SK-N-SH (cell line): ENCODE measurements at regions of chr3 and their contacts with region 1.

Region 1: GRCh38 chr3:50337191-50337841 is 3.3 kb downstream of the RASSF1 start:
- DNase-seq: peak; percentile 100
- H3K4me3 ChIP-seq: peak overlapping the region; percentile 77 to 79
- H3K27ac ChIP-seq: peak overlapping the region; percentile 82 to 98
- H3K4me1 ChIP-seq: peaks cover 10 to 33% of the 10 kb centered on the region in 2 experiments
- H3K27me3 ChIP-seq: no peaks in the 10 kb centered on the region
- CTCF ChIP-seq: no peak
- EP300 ChIP-seq: peak; percentile 13 to 41; a peak in 1 of 4 replicates
- RAD21 ChIP-seq: no peak

Region 2: DNA sequence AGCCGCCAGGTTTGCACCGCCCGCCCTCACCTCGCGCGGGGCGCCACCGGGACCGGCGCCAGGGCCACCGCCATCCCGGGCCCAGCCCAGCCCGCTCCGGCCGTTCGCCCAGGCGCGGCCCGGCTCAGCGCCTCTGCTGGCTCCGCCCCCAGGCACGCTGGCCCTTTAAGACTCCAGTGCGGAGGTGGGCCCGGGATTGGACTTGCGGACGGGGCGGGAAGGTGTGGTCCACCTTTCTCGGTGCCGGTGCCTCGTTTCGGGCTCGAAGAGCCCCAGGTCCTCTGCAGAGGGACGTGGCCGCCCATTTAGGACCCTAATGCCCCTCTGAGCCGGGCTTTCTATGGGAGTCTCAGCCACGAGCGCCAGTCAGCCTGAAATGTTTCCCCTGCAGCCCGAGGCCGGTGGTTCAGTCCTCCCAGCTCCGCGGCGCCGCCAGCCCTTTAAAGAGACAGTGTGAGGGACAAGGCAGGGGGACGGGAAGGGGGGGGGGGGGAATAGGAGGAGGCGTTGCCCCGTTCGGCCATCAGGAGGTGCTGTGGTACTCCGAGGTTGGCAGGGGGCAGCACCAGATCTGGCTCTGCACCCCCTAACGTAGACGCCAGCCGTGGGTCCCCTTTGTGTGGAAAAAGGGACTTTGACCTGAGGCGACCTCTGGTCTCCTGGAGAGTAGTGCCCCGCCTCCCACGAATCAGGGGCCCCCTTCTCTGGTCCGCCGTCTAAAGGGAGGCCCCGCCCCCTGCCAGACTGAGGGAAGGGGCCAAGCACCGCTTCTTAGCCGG is 15.8 kb before region 1 on chr3:
- CTCF ChIA-PET with region 1: interaction called, 60 read pairs
- POLR2A ChIA-PET with region 1: interaction called, 4 read pairs
- DNase-seq: peak; percentile 96
- H3K4me3 ChIP-seq: peak overlapping the region; percentile 92 to 94
- H3K27ac ChIP-seq: peak overlapping the region; percentile 92 to 94
- H3K4me1 ChIP-seq: peaks cover 0 to 40% of the 10 kb centered on the region in 2 experiments; a peak in 2 of 4 replicates
- H3K27me3 ChIP-seq: no peaks in the 10 kb centered on the region
- CTCF ChIP-seq: peak; percentile 61
- EP300 ChIP-seq: peak in 1 of 2 experiments; percentile 70; a peak in 1 of 4 replicates
- RAD21 ChIP-seq: no peak